ENCODE measurements at regions of chr14 and their contacts with region 1.

Region 1: GRCh38 chr14:50520947-50521815 is 11.2 kb downstream of the MAP4K5 start:
- DNase-seq: peak; percentile 87
- H3K4me3 Mint-ChIP-seq: no peak overlapping the region
- H3K27ac Mint-ChIP-seq: peak overlapping the region; percentile 89
- H3K4me1 Mint-ChIP-seq: peaks cover 53% of the 10 kb centered on the region
- H3K27me3 Mint-ChIP-seq: no peaks in the 10 kb centered on the region

Region 2: DNA sequence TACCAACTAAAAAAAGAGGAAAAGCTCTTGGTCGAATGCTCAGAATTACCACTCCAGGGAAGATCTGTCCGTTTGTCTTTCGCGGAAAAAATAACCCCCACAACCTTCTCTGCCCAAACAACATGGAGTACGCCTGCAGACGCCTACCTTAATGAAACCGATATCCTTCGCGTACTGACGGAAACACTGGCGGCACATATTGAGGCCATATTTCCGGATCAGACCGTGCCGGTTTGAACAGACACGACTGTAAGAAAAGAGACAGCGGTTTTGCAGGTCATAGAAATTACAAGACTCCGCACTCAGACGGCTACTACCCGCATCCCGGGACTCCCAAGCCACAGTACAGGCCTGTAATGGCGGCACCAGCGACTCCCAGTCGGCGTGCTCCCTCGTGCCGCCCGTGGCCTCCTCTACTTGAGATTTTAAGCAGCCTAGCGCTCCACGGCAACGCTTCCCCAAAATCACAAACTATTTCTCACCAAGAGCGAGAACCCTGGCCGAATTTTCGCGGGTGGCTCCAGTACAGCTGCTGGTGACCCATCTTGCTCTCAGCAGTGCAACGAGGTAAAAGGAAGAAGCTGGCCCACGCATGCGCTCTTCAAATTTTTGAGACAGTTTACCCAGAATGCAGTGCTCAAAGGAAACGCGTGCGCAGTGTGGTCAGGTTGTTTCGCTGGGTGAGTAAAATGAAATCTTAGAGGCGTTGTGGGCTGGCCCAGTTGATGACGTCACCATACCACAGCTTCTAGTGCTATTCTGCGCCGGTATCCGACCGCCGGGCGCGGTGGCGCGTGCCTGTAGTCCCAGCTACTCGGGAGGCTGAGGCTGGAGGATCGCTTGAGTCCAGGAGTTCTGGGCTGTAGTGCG is 935.1 kb before region 1 on chr14 and contains the start of gene RPS29:
- CTCF ChIA-PET with region 1: no interaction called
- intact Hi-C with region 1: loop called (anchors 5 kb)
- DNase-seq: peak; percentile 99
- H3K4me3 Mint-ChIP-seq: peak within 1 kb of the TSS; percentile 87
- H3K27ac Mint-ChIP-seq: peak within 1 kb of the TSS; percentile 98
- H3K4me1 Mint-ChIP-seq: peaks cover 40% of the 10 kb centered on the region
- H3K27me3 Mint-ChIP-seq: peaks cover 3% of the 10 kb centered on the region
- total RNA-seq, gene RPS29: 1,858 to 2,382 TPM

Region 3: GRCh38 chr14:49862089-49862673 is 659.0 kb before region 1 on chr14:
- CTCF ChIA-PET with region 1: no interaction called
- intact Hi-C with region 1: loop called (anchors 2 kb)
- DNase-seq: peak; percentile 91
- H3K4me3 Mint-ChIP-seq: no peak overlapping the region
- H3K27ac Mint-ChIP-seq: no peak overlapping the region
- H3K4me1 Mint-ChIP-seq: peaks cover 14% of the 10 kb centered on the region
- H3K27me3 Mint-ChIP-seq: peaks cover 2% of the 10 kb centered on the region

Region 4: GRCh38 chr14:50116181-50116956 is 404.8 kb before region 1 on chr14 and contains the start of gene VCPKMT:
- CTCF ChIA-PET with region 1: no interaction called
- intact Hi-C with region 1: loop called (anchors 2 kb)
- DNase-seq: peak; percentile 96
- H3K4me3 Mint-ChIP-seq: peak within 1 kb of the TSS; percentile 98
- H3K27ac Mint-ChIP-seq: peak within 1 kb of the TSS; percentile 94
- H3K4me1 Mint-ChIP-seq: peaks cover 32% of the 10 kb centered on the region
- H3K27me3 Mint-ChIP-seq: no peaks in the 10 kb centered on the region
- total RNA-seq, gene VCPKMT: 9.6 to 10.5 TPM

Region 5: DNA sequence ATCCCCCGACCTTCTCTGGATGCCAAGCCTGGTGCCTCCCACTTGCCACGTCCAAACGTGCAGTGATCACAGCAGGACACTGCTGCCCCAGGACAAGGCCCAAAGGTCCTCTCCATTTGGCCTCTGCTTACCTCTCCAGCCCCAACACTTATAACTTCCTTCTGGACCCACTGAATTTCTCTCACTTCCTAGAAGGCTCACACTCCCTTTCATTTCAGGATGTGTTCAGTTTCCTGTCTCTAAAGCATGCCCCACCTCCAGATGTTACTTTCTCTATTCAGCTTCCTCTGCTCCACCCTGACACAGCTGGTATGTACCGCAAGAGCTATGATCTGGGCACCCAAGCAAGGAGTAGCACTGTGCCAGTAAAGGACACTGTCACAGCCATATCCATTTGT is 157.5 kb before region 1 on chr14:
- CTCF ChIA-PET with region 1: interaction called, 4 read pairs
- intact Hi-C with region 1: loop called (anchors 1 kb)
- DNase-seq: peak; percentile 74
- H3K4me3 Mint-ChIP-seq: peak overlapping the region; percentile 73
- H3K27ac Mint-ChIP-seq: peak overlapping the region; percentile 84
- H3K4me1 Mint-ChIP-seq: peaks cover 18% of the 10 kb centered on the region
- H3K27me3 Mint-ChIP-seq: no peaks in the 10 kb centered on the region

Region 6: DNA sequence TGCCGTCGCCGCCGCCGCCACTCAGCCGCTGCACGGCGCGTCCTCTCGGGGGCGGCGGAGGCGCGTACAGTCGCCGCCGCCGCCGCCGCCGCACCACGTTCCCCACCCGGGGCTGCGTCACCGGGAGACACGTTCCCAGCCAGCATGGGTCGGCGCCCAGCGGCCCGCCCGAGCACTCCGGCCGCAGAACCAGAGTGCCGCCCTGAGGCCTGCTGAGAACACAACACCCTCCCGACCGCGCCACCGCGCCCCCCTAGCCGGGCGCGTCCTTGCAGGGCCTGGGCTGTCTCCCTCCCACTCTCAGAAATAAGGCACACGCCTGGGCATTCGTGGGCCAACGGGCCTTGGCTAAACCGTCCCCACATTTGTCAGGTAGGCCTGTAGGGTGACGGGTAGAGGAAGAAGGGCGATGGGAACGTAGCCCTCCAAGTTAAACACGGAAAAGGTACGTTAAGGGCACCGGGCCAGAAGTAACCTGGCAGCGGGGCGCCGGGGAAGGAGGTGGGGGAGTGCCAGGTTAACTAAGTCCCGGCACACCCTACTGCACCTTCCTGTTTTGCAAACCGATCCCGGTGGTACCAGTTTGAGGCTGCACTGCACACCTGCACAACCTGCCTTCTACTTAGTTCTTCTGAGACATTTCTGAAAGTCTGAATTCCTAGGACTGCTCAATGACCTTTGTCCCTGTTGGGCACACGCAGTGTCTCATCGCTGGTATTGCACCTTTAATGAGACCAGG is 11.5 kb after region 1 on chr14 and contains the start of gene MAP4K5:
- CTCF ChIA-PET with region 1: interaction called, 12 read pairs
- intact Hi-C with region 1: no loop called
- DNase-seq: peak; percentile 89
- H3K4me3 Mint-ChIP-seq: peak within 1 kb of the TSS; percentile 85
- H3K27ac Mint-ChIP-seq: peak within 1 kb of the TSS; percentile 72
- H3K4me1 Mint-ChIP-seq: peaks cover 45% of the 10 kb centered on the region
- H3K27me3 Mint-ChIP-seq: no peaks in the 10 kb centered on the region
- total RNA-seq, gene MAP4K5: 10.2 to 11.2 TPM

Region 7: GRCh38 chr14:50823051-50823761 is 302.0 kb after region 1 on chr14:
- CTCF ChIA-PET with region 1: no interaction called
- intact Hi-C with region 1: loop called (anchors 5 kb)
- DNase-seq: peak; percentile 30
- H3K4me3 Mint-ChIP-seq: peak overlapping the region; percentile 59
- H3K27ac Mint-ChIP-seq: peak overlapping the region; percentile 73
- H3K4me1 Mint-ChIP-seq: peaks cover 89% of the 10 kb centered on the region
- H3K27me3 Mint-ChIP-seq: no peaks in the 10 kb centered on the region